Astrocyte of the cerebellum (primary cell): ENCODE measurements at regions of chr17 and their contacts with region 1.

Region 1: GRCh38 chr17:15957206-15957605 is 12.3 kb downstream of the ADORA2B start:
- DNase-seq: no peak
- H3K4me3 ChIP-seq: no peak overlapping the region
- CTCF ChIP-seq: no peak

Region 2: DNA sequence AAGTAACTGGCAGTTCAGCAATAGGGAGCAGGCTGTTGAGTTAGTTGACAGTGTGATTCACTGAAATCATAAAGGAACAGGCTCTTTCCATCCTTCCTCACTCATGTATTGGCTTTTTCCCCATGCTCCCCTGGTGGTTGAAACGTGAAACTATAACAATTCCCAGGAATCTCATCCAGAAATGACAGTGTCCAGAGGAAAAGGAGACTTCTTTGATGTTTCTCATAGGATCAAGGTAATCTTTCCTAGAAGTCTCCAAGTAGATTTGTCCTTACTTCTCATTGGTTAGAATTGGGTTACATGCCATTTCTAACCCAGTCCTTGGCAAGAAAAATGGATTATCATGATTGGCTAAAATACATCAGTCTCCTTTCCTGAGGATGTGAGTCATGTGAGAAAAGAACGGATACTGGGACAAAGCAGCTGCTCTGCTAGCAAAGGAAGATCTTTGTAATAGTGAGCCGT is 56.8 kb after region 1 on chr17:
- in situ Hi-C with region 1: loop called (anchors 5 kb)
- DNase-seq: peak; percentile 53
- H3K4me3 ChIP-seq: no peak overlapping the region
- CTCF ChIP-seq: peak; percentile 78

Region 3: DNA sequence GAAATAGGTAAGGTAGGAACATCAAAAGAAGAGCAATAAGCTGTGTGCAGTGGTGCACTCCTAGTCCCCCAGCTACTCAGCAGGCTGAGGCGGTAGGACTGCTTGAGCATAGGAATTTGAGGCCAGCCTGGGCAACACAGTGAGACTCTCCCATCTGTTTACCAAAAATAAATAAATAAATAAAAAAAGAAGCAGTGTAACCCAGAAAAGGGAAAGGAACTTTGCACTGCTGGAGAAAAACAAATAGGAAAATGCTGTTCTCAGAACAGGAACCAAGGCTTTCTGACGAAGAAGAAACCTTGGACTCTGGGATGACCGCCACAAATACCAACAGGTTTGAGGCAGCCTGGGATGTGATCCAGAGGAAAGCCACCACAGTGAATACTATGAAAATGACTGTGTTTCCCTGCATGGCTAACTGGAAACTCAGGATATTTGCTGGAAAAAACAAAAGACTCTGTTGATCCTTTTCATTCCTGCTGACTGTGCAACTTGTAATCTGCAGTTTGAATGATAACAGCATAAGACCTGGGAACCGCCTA is 83.6 kb after region 1 on chr17:
- in situ Hi-C with region 1: no loop called
- DNase-seq: peak; percentile 95
- H3K4me3 ChIP-seq: no peak overlapping the region
- CTCF ChIP-seq: no peak

Region 4: GRCh38 chr17:16189791-16190348 is 232.7 kb after region 1 on chr17:
- in situ Hi-C with region 1: no loop called
- DNase-seq: no peak
- H3K4me3 ChIP-seq: no peak overlapping the region
- CTCF ChIP-seq: no peak

Region 5: DNA sequence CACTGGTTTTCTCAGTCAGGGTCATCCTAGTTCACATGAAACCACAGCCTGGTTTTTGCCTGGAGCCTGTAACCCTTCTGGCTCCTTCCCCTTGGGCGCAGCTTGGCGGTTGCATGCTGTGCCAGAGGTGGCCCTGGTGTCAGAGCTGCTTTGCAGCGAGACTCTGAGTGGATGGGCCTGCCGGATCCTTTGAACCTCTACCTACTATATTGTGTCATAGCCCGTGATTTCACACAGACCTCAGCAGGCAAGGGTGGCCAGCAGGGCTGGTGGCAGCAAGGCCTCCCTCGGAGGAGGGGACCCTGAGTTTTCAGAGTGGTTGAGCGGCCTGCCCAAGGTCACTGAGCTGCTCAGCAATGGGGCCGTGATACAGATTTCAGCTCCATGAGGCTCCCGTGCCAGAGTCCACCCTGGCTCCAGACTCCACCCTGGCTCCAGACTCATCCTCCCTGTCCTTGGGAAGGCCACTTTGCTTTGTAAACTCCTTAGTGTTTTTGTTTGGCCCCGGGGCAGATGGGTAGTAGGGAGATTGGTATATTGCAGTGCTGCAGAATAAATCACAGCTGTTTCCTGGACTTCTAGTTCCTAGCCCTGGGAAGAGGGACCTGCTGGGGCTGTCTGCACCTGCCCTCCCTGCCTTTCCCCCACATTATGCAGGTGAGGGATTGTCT is 1094.7 kb after region 1 on chr17:
- in situ Hi-C with region 1: no loop called
- DNase-seq: no peak
- H3K4me3 ChIP-seq: no peak overlapping the region
- CTCF ChIP-seq: no peak